Activated CD4-positive, alpha-beta T cell treated with anti-CD3 and anti-CD28 coated beads for 36 hours (primary cell): ENCODE measurements at regions of chr16 and their contacts with region 1.

Region 1: DNA sequence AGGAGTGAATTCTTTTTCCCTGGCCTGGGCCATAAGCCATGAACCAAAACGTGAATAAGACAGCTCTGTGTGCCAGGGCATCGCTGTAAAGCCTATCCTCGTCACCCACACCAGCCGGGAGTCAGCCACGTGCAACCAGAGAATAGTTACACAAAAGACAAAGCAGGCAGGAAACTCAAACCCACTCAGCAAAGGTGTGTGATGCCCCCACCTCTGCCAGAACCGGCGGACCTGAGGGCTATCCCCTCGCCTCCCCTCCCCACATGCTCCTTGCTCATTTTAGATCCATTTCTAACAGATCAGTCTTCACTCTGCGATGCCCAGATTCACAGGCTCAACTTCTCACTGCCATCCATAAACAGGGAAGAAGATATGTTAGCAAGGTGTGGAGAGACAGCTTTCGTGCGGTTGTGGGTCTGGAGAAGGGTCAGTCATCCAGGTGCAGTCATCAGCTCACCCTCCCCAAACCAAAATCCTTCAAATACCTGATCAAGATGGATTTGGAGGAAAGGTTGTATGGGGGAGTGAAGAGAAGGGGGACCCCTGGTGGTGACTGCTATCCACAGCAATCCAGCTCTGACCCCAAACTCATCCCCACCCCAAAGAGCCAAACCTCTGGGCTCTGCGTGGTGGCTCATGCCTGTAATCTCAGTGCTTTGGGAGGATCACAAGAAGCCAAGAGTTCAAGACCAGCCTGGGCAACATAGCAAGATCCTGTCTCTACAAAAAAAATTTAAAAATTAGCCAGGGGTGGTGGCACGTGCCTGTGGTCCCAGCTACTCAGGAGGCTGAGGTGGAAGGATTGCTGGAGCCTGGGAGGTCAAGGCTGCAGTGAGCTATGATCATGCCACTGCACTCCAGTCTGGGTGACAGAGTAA is 219.2 kb downstream of the C16orf78 start:
- DNase-seq: peak; percentile 65
- ATAC-seq: peak; percentile 74
- H3K4me3 Mint-ChIP-seq: no peak overlapping the region
- H3K27ac Mint-ChIP-seq: no peak overlapping the region
- H3K4me1 Mint-ChIP-seq: peaks cover 11% of the 10 kb centered on the region
- H3K27me3 Mint-ChIP-seq: peaks cover 3% of the 10 kb centered on the region

Region 2: GRCh38 chr16:49281843-49282642 is 310.7 kb before region 1 on chr16:
- CTCF ChIA-PET with region 1: no interaction called
- POLR2A ChIA-PET with region 1: no interaction called
- intact Hi-C with region 1: no loop called
- DNase-seq: peak; percentile 92
- ATAC-seq: peak; percentile 94
- H3K4me3 Mint-ChIP-seq: peak overlapping the region; percentile 56
- H3K27ac Mint-ChIP-seq: no peak overlapping the region
- H3K4me1 Mint-ChIP-seq: peaks cover 11% of the 10 kb centered on the region
- H3K27me3 Mint-ChIP-seq: peaks cover 61% of the 10 kb centered on the region

Region 3: DNA sequence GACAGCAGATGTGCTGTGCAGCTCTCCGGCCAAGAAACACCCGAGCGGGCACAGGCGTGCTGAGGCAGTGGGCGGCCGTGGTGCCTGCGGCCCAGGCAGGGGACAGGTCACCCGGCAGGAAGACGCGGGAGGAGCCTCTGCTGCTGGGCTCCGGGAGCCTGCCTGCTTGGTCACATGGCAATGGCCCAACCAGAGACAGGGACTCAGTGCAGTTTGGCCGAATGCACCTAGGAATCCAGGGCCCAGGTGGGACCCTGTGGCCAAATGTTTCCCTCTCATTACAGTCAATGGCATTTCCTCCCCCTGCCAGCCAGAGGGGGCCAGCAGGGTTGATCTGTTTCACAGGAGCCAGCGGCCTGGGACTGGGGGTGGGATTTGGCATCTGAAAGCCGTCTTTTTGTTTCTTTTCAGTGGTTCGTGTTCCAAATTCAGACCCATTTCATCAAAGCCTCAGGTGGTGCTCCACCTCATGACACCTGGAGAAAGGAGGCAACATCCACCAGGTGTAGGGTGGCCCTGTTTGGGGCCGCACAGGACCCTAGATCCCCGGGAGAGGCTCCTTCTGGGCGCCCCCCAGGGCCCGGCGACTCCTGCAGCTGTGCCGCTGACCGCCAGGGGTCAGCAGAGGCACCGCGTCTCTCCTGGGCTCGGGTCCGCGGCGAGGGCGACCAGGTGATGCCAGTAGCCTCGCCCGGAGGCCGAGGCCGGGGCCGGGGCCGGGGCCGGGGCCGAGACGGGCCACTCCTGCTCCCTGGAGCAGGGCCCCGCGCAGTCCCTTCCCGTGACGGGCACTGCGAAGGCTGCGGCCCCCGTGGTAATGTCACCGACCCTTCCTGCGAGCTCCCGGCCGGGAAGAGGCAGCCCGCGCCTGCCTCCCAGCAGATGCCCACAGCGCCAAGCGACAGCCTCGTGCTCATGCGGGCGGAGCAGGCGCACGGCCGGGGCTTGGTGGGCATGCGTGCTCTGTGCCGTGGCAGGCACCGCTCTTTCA is 100.7 kb before region 1 on chr16:
- CTCF ChIA-PET with region 1: interaction called, 12 read pairs
- POLR2A ChIA-PET with region 1: no interaction called
- intact Hi-C with region 1: loop called (anchors 1 to 5 kb)
- DNase-seq: peak; percentile 69
- ATAC-seq: peak; percentile 64
- H3K4me3 Mint-ChIP-seq: no peak overlapping the region
- H3K27ac Mint-ChIP-seq: no peak overlapping the region
- H3K4me1 Mint-ChIP-seq: no peaks in the 10 kb centered on the region
- H3K27me3 Mint-ChIP-seq: peaks cover 2% of the 10 kb centered on the region

Region 4: DNA sequence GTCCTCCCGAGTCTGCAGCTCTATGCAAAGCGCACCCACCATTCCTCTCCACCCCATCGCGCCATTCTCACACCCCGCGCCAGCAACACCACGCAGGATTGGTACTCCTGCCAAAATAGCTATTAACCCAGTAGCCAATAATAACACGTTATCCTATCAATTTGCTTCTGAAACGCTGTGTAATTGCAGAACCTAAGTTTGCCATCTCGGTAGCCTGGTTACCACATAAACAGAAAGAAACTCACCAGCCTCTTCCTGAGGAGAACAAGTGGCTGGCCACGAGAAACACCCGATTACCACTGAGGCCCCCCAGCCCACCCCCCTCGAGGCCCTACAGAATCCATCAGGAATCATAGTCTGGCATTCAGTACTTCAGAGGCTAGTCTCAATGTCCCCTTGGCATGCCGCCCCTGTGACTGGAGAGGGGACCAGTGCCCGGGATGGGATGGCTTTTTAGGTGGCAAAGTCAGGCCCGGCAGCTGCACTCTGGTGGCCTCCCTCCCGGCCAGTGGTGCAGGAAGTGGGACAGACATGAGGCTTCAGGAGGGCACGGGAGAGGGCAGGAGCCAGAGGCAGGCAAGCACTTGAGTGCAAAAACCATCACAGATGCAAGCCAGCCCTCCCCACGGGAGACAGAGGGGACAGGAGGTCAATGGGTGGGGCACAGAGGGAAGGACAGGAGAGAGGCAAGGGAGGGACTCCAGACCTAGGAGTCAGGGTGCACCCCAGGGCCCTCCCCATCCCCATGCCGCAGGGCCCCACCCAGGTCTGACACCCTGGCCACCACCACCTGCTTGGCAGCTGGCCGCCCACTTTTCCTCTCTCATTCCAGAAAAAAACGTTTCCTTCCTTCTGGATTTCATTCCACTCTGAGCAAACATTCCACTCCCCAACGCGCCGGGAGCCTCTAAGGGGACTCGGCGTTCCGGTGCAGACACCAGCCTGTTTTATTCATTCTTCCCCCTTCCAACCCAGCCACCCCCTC is 70.6 kb after region 1 on chr16:
- CTCF ChIA-PET with region 1: no interaction called
- POLR2A ChIA-PET with region 1: no interaction called
- intact Hi-C with region 1: no loop called
- DNase-seq: no peak
- ATAC-seq: no peak
- H3K4me3 Mint-ChIP-seq: no peak overlapping the region
- H3K27ac Mint-ChIP-seq: no peak overlapping the region
- H3K4me1 Mint-ChIP-seq: no peaks in the 10 kb centered on the region
- H3K27me3 Mint-ChIP-seq: no peaks in the 10 kb centered on the region